ENCODE measurements at regions of chr3 and their contacts with region 1.

Region 1: DNA sequence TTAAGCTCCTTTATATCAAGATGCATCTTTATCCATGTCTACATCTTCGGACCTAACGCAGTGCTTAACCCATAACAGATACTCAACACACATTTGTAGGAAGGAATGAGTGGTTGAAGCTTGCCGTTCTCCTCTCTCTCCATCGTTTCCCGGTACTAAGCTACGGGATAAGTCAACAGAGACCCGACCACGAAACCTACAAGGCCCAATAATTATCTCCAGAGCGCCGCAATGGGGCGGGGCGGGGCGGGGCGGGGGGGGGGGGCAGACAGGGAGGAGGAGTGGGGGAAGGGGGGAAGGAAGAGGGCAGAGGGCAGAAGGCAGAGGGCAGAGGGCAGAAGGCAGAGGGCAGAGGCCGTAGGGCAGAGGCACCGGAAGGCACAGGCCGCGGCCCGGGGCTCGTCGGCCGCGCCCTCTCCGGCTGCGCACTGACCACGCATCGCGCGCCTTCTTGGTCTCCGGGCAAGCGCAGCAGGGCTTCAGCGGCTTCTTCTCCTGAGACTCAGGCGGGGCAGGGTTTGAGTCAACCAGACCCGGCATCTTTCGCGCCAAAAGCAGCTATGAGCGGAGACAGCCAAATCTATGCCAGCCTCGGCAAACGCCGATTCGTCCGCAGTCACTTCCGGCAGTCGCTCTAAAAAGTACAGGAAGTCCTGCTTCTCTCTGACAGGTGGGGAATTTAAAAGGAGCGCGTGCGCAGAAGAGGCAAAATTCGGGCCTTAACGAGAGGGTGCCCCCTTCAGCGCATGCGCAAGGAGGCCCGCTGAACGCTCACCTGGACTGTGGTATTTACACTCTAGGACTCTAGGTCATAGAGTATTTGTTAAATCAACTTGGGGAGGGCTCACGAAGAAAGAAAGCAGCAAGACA is at the start of gene COX17:
- DNase-seq: peak; percentile 98
- H3K4me3 Mint-ChIP-seq: peak within 1 kb of the TSS; percentile 95
- H3K27ac Mint-ChIP-seq: peak within 1 kb of the TSS; percentile 91
- H3K4me1 Mint-ChIP-seq: peaks cover 36% of the 10 kb centered on the region
- H3K27me3 Mint-ChIP-seq: no peaks in the 10 kb centered on the region
- total RNA-seq, gene COX17: 108 to 112 TPM

Region 2: GRCh38 chr3:119279101-119279554 is 397.9 kb before region 1 on chr3:
- CTCF ChIA-PET with region 1: interaction called, 10 read pairs
- POLR2A ChIA-PET with region 1: no interaction called
- intact Hi-C with region 1: loop called (anchors 1 kb)
- DNase-seq: no peak
- H3K4me3 Mint-ChIP-seq: no peak overlapping the region
- H3K27ac Mint-ChIP-seq: no peak overlapping the region
- H3K4me1 Mint-ChIP-seq: peaks cover 7% of the 10 kb centered on the region
- H3K27me3 Mint-ChIP-seq: no peaks in the 10 kb centered on the region

Region 3: GRCh38 chr3:119463171-119464169 is 213.5 kb before region 1 on chr3 and contains the start of gene TMEM39A:
- CTCF ChIA-PET with region 1: interaction called, 11 read pairs
- POLR2A ChIA-PET with region 1: interaction called, 15 read pairs
- intact Hi-C with region 1: loop called (anchors 1 kb)
- DNase-seq: peak; percentile 99
- H3K4me3 Mint-ChIP-seq: peak within 1 kb of the TSS; percentile 97
- H3K27ac Mint-ChIP-seq: peak within 1 kb of the TSS; percentile 98
- H3K4me1 Mint-ChIP-seq: peaks cover 41% of the 10 kb centered on the region
- H3K27me3 Mint-ChIP-seq: no peaks in the 10 kb centered on the region
- total RNA-seq, gene TMEM39A: 33.9 to 34.3 TPM

Region 4: GRCh38 chr3:119559441-119559963 is 117.5 kb before region 1 on chr3 and contains the start of gene CD80:
- CTCF ChIA-PET with region 1: interaction called, 3 read pairs
- POLR2A ChIA-PET with region 1: no interaction called
- intact Hi-C with region 1: loop called (anchors 1 kb)
- DNase-seq: peak; percentile 84
- H3K4me3 Mint-ChIP-seq: peak within 1 kb of the TSS; percentile 24
- H3K27ac Mint-ChIP-seq: peak within 1 kb of the TSS; percentile 56
- H3K4me1 Mint-ChIP-seq: peaks cover 24% of the 10 kb centered on the region
- H3K27me3 Mint-ChIP-seq: no peaks in the 10 kb centered on the region
- total RNA-seq, gene CD80: 3.4 to 3.7 TPM

Region 5: GRCh38 chr3:119628816-119629445 is 48.1 kb before region 1 on chr3:
- CTCF ChIA-PET with region 1: interaction called, 4 read pairs
- POLR2A ChIA-PET with region 1: interaction called, 5 read pairs
- intact Hi-C with region 1: loop called (anchors 2 kb)
- DNase-seq: no peak
- H3K4me3 Mint-ChIP-seq: no peak overlapping the region
- H3K27ac Mint-ChIP-seq: peak overlapping the region; percentile 77
- H3K4me1 Mint-ChIP-seq: peaks cover 41% of the 10 kb centered on the region
- H3K27me3 Mint-ChIP-seq: peaks cover 3% of the 10 kb centered on the region

Region 6: DNA sequence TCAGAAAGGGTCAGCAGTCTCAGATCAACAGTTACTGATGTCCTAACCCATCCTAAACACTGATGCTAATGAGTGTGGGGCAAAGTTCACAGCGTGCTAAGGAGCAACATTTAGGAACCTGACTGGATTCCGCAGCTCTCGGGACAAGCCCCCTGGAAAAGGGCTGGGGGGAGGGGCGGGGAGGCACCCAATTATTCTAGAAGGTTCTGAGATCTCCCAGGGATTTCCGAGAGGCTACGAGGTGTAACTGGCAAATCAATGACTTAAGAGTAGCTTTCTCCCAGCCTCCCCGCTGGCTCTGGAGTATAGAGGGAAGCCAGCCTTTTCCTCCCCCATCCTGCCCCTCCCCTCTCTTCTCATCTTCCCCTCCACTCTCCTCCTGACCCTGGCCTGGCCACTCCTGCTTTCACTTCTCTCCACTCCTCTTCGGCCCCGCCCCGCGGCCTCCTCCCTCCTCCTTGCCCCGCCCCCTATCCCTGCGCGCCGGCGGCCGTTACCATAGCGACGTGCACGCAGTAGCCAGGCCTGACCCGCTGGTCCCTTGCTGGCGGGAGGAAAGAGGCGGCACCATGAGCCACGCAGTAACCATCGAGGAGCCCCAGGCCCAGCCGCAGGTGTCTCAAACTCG is 25.6 kb after region 1 on chr3 and contains the start of gene CFAP91:
- CTCF ChIA-PET with region 1: interaction called, 3 read pairs
- POLR2A ChIA-PET with region 1: interaction called, 4 read pairs
- intact Hi-C with region 1: loop called (anchors 1 kb)
- DNase-seq: peak; percentile 92
- H3K4me3 Mint-ChIP-seq: peak within 1 kb of the TSS; percentile 74
- H3K27ac Mint-ChIP-seq: no peak within 1 kb of the TSS
- H3K4me1 Mint-ChIP-seq: peaks cover 43% of the 10 kb centered on the region
- H3K27me3 Mint-ChIP-seq: no peaks in the 10 kb centered on the region
- total RNA-seq, gene CFAP91: 0.29 to 0.31 TPM

Region 7: DNA sequence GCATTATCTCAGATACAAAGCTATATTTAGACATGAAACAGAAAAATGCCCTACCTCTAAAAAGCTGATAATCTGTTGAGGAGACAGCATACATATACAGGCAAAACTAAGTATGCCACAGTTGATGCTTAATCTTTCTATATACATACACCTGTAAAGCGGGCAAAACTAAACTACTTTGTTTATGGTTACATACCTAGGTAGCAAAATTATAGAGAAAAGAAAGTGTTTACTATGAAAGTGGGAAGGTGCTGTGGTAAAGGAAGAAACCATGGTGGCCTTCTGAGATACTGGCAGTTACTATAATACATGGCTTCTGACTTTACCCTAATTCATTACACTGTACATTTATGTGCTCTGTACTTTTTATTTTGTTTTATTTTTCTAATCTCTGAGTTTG is 68.9 kb after region 1 on chr3:
- CTCF ChIA-PET with region 1: no interaction called
- POLR2A ChIA-PET with region 1: no interaction called
- intact Hi-C with region 1: no loop called
- DNase-seq: no peak
- H3K4me3 Mint-ChIP-seq: no peak overlapping the region
- H3K27ac Mint-ChIP-seq: no peak overlapping the region
- H3K4me1 Mint-ChIP-seq: no peaks in the 10 kb centered on the region
- H3K27me3 Mint-ChIP-seq: peaks cover 18% of the 10 kb centered on the region

Region 8: DNA sequence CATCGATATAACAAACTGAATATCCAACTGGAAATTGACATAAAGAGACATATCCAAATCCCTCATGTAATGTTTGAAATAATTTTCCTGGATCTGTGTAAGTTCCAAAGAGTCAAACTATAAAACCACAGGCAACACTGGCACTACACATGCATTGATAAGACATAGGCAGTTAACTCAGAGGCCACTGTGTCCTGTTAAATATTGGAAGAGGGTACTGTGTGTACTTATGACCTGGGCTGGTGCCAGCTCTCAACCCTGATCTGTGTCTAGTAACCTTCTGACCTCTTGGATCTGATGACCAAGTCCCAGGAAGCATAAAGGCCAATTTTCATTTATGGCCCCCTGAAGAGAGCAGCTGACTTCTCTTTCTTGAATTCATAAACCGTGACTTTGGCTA is 109.4 kb after region 1 on chr3:
- CTCF ChIA-PET with region 1: no interaction called
- POLR2A ChIA-PET with region 1: no interaction called
- intact Hi-C with region 1: no loop called
- DNase-seq: no peak
- H3K4me3 Mint-ChIP-seq: no peak overlapping the region
- H3K27ac Mint-ChIP-seq: no peak overlapping the region
- H3K4me1 Mint-ChIP-seq: no peaks in the 10 kb centered on the region
- H3K27me3 Mint-ChIP-seq: no peaks in the 10 kb centered on the region

Measured in activated CD4-positive, alpha-beta memory T cell treated with anti-CD3 and anti-CD28 coated beads for 36 hours (primary cell).